CD4-positive, alpha-beta T cell (primary cell): ENCODE measurements at regions of chr22 and their contacts with region 1.

Region 1: GRCh38 chr22:41352051-41352450 is 29.7 kb upstream of the TEF start:
- DNase-seq: no peak
- ATAC-seq: no peak
- H3K4me3 ChIP-seq: no peak overlapping the region
- H3K4me3 Mint-ChIP-seq: no peak overlapping the region
- H3K27ac ChIP-seq: no peak overlapping the region
- H3K27ac Mint-ChIP-seq: no peak overlapping the region
- H3K4me1 ChIP-seq: no peaks in the 10 kb centered on the region
- H3K4me1 Mint-ChIP-seq: no peaks in the 10 kb centered on the region
- H3K27me3 ChIP-seq: no peaks in the 10 kb centered on the region
- H3K27me3 Mint-ChIP-seq: no peaks in the 10 kb centered on the region
- CTCF ChIP-seq: no peak

Region 2: GRCh38 chr22:41274856-41275255 is 77.2 kb before region 1 on chr22:
- CTCF ChIA-PET with region 1: no interaction called
- POLR2A ChIA-PET with region 1: no interaction called
- intact Hi-C with region 1: loop called in 1 of 2 experiments (anchors 5 kb)
- DNase-seq: no peak
- ATAC-seq: no peak
- H3K4me3 ChIP-seq: no peak overlapping the region
- H3K4me3 Mint-ChIP-seq: peak overlapping the region; percentile 48
- H3K27ac ChIP-seq: no peak overlapping the region
- H3K27ac Mint-ChIP-seq: peak overlapping the region; percentile 20
- H3K4me1 ChIP-seq: no peaks in the 10 kb centered on the region
- H3K4me1 Mint-ChIP-seq: no peaks in the 10 kb centered on the region
- H3K27me3 ChIP-seq: no peaks in the 10 kb centered on the region
- H3K27me3 Mint-ChIP-seq: no peaks in the 10 kb centered on the region
- CTCF ChIP-seq: no peak

Region 3: DNA sequence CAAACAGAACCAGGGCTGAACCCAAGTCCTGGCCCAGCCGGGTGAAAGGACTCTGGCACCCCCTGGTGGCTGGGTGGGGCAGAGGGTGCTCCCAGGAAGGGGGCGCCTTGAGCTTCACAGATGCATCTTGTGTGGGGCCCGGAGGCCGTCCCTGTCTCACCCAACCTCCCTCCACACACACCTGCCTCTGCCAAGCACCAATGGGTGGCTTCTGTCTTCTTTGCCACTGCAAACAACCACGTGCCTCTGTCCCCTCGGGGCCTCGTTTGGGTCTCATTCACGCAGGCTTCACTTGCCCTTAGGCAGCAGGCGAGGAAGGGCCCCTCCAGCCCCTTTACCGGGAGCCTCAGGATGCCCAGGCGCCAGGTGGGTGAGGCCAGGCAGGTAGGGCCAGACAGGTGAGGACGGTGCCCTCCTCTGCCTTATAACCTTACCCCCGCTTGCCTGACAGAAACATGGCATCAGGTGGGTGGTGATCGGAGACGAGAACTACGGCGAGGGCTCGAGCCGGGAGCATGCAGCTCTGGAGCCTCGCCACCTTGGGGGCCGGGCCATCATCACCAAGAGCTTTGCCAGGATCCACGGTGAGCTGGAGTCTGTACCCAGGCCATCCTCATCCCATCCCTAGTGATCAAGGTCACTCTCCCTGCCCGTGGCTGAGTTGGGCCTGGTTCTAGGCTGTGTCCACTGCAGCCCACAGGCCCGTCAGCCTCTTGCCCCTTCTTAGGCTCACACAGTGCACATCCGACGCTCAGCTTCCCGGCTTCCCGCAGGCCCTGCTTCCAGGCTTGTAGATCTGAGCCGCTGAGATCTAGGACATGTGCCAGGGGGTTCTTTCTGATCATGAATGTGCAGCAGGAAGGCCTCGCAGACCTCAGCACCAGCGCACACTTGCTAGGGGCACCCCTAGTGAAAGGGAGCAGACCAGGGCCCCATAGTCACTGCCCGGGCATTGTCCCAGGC is 175.1 kb after region 1 on chr22:
- CTCF ChIA-PET with region 1: no interaction called
- POLR2A ChIA-PET with region 1: no interaction called
- intact Hi-C with region 1: no loop called
- DNase-seq: peak; percentile 57 to 82 (median 68)
- ATAC-seq: peak; percentile 65
- H3K4me3 ChIP-seq: no peak overlapping the region
- H3K4me3 Mint-ChIP-seq: no peak overlapping the region
- H3K27ac ChIP-seq: peak overlapping the region in 1 of 2 donors; percentile 60
- H3K27ac Mint-ChIP-seq: peak overlapping the region; percentile 47
- H3K4me1 ChIP-seq: peaks cover 28% of the 10 kb centered on the region
- H3K4me1 Mint-ChIP-seq: peaks cover 15% of the 10 kb centered on the region
- H3K27me3 ChIP-seq: no peaks in the 10 kb centered on the region
- H3K27me3 Mint-ChIP-seq: no peaks in the 10 kb centered on the region
- CTCF ChIP-seq: peak; percentile 80